Panc1 (cell line): ENCODE measurements at regions of chr1 and their contacts with region 1.

Region 1: GRCh38 chr1:93200086-93200620 is 19.6 kb downstream of the CCDC18 start:
- DNase-seq: no peak
- ATAC-seq: no peak
- H3K4me3 ChIP-seq: no peak overlapping the region
- H3K27ac ChIP-seq: no peak overlapping the region
- H3K4me1 ChIP-seq: no peaks in the 10 kb centered on the region
- H3K27me3 ChIP-seq: no peaks in the 10 kb centered on the region
- CTCF ChIP-seq: no peak

Region 2: DNA sequence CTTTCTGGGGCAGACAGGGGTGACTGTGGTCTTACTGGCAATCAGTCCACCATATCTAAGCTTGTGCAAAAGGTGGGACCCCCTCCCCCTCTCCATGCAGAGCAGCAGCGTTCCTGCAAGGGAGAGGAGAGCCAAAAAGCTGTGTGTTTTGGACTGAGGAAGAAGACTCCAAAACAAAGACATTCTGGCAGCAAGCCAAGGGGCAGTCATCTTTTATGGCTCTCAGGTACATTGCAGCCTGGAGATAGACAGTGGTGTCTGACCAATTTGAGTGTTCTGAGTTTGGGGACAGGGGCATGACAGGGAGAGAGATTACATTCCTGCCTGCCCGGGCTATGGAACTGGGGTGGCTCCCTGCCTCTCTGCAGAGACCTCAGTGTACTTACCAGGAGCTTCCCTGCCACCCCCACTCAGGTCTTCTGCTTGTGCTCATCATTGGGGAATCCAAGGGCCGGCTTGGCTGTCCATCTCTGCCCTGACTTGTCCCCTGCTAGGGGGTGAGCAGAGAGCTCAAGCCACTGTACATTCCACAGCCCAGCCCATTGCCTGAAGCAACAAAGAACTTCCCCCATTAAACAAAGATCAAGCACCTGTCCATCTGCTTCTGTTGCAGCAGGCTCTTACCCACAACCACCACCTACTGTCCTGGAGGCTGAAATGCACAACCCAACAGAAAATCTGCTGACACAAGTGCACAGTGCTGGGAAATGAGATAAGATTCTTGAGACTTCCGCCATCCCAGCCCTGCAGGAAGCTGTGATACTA is 546.4 kb before region 1 on chr1:
- CTCF ChIA-PET with region 1: no interaction called
- POLR2A ChIA-PET with region 1: no interaction called
- in situ Hi-C with region 1: no loop called
- intact Hi-C with region 1: no loop called
- DNase-seq: no peak
- ATAC-seq: no peak
- H3K4me3 ChIP-seq: no peak overlapping the region
- H3K27ac ChIP-seq: no peak overlapping the region
- H3K4me1 ChIP-seq: no peaks in the 10 kb centered on the region
- H3K27me3 ChIP-seq: no peaks in the 10 kb centered on the region
- CTCF ChIP-seq: no peak

Region 3: DNA sequence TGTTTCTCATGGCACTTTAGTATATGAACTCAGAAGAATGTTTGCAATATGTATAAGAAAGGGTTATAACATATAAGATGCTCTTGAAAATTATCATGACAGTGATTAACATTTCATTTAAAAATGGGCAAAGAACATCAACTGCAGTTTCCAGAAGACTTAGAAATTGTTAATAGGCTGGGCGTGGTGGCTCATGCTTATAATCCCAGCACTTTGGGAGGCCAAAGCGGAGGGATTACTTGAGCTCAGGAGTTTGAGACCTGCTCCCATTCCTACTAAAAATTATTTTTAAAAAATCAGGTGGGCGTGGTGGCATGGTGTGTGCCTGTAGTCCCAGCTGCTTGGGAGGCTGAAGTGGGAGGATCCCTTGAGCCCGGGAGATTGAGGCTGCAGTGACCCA is 98.0 kb before region 1 on chr1:
- CTCF ChIA-PET with region 1: no interaction called
- POLR2A ChIA-PET with region 1: interaction called, 19 read pairs
- in situ Hi-C with region 1: no loop called
- intact Hi-C with region 1: no loop called
- DNase-seq: no peak
- ATAC-seq: no peak
- H3K4me3 ChIP-seq: no peak overlapping the region
- H3K27ac ChIP-seq: no peak overlapping the region
- H3K4me1 ChIP-seq: no peaks in the 10 kb centered on the region
- H3K27me3 ChIP-seq: no peaks in the 10 kb centered on the region
- CTCF ChIP-seq: no peak

Region 4: GRCh38 chr1:93215322-93215721 is 15.2 kb after region 1 on chr1:
- CTCF ChIA-PET with region 1: no interaction called
- POLR2A ChIA-PET with region 1: no interaction called
- in situ Hi-C with region 1: no loop called
- intact Hi-C with region 1: no loop called
- DNase-seq: no peak
- ATAC-seq: no peak
- H3K4me3 ChIP-seq: no peak overlapping the region
- H3K27ac ChIP-seq: no peak overlapping the region
- H3K4me1 ChIP-seq: no peaks in the 10 kb centered on the region
- H3K27me3 ChIP-seq: no peaks in the 10 kb centered on the region
- CTCF ChIP-seq: no peak

Region 5: GRCh38 chr1:93296555-93297154 is 96.5 kb after region 1 on chr1:
- CTCF ChIA-PET with region 1: no interaction called
- POLR2A ChIA-PET with region 1: no interaction called
- in situ Hi-C with region 1: no loop called
- intact Hi-C with region 1: no loop called
- DNase-seq: no peak
- ATAC-seq: no peak
- H3K4me3 ChIP-seq: no peak overlapping the region
- H3K27ac ChIP-seq: no peak overlapping the region
- H3K4me1 ChIP-seq: no peaks in the 10 kb centered on the region
- H3K27me3 ChIP-seq: no peaks in the 10 kb centered on the region
- CTCF ChIP-seq: no peak